CD4-positive, alpha-beta memory T cell (primary cell): ENCODE measurements at regions of chr2 and their contacts with region 1.

Region 1: GRCh38 chr2:195656859-195657633 is at the start of gene SLC39A10:
- DNase-seq: peak; percentile 96 to 99 (median 97)
- H3K4me3 ChIP-seq: peak within 1 kb of the TSS; percentile 66 to 80
- H3K4me3 Mint-ChIP-seq: peak within 1 kb of the TSS; percentile 96 to 99 (median 99)
- H3K27ac ChIP-seq: peak within 1 kb of the TSS; percentile 99
- H3K27ac Mint-ChIP-seq: peak within 1 kb of the TSS; percentile 97 to 100 (median 99)
- H3K4me1 ChIP-seq: peaks cover 35% of the 10 kb centered on the region
- H3K4me1 Mint-ChIP-seq: peaks cover 18 to 48% (median 22%) of the 10 kb centered on the region in 4 donors
- H3K27me3 ChIP-seq: no peaks in the 10 kb centered on the region
- H3K27me3 Mint-ChIP-seq: peaks cover 0 to 2% of the 10 kb centered on the region in 2 donors
- total RNA-seq, gene SLC39A10: 101 to 102 TPM

Region 2: GRCh38 chr2:195404651-195405050 is 252.4 kb before region 1 on chr2:
- CTCF ChIA-PET with region 1: interaction called, 4 read pairs
- POLR2A ChIA-PET with region 1: no interaction called
- intact Hi-C with region 1: loop called (anchors 1 kb)
- DNase-seq: peak in 4 of 5 donors; percentile 2 to 14 (median 6)
- H3K4me3 ChIP-seq: no peak overlapping the region
- H3K4me3 Mint-ChIP-seq: no peak overlapping the region
- H3K27ac ChIP-seq: no peak overlapping the region
- H3K27ac Mint-ChIP-seq: no peak overlapping the region
- H3K4me1 ChIP-seq: no peaks in the 10 kb centered on the region
- H3K4me1 Mint-ChIP-seq: peaks cover 0 to 2% (median 0%) of the 10 kb centered on the region in 4 donors
- H3K27me3 ChIP-seq: no peaks in the 10 kb centered on the region
- H3K27me3 Mint-ChIP-seq: no peaks in the 10 kb centered on the region

Region 3: DNA sequence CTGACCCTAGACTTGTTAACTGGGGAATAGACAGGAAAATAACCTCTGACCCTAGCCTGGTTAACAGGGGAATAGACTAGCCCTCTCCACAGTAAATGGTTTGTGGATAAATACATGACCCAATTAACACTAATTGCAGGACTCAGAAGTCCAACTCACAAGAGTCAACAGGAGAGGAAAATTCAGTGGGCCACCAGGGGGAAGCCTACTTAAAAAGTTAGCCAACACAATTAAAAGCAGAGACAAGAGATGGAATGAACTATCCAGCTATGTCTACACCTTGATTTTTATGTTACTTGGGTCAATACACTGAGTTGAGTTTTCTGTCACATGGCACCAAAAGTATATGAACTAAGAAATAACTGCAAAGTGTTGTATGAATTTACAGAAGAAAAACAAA is 158.9 kb before region 1 on chr2:
- CTCF ChIA-PET with region 1: interaction called, 245 read pairs
- POLR2A ChIA-PET with region 1: interaction called, 150 read pairs
- intact Hi-C with region 1: loop called (anchors 1 kb)
- DNase-seq: peak; percentile 52 to 66 (median 60)
- H3K4me3 ChIP-seq: no peak overlapping the region
- H3K4me3 Mint-ChIP-seq: peak overlapping the region in 2 of 8 donors; percentile 10 to 22
- H3K27ac ChIP-seq: no peak overlapping the region
- H3K27ac Mint-ChIP-seq: peak overlapping the region in 3 of 7 donors; percentile 2 to 70 (median 19)
- H3K4me1 ChIP-seq: peaks cover 12% of the 10 kb centered on the region
- H3K4me1 Mint-ChIP-seq: peaks cover 18 to 41% (median 31%) of the 10 kb centered on the region in 4 donors
- H3K27me3 ChIP-seq: no peaks in the 10 kb centered on the region
- H3K27me3 Mint-ChIP-seq: no peaks in the 10 kb centered on the region

Region 4: GRCh38 chr2:195533771-195534642 is 123.0 kb before region 1 on chr2:
- CTCF ChIA-PET with region 1: interaction called, 126 read pairs
- POLR2A ChIA-PET with region 1: interaction called, 319 read pairs
- intact Hi-C with region 1: loop called (anchors 1 kb)
- DNase-seq: peak in 4 of 5 donors; percentile 42 to 77 (median 49)
- H3K4me3 ChIP-seq: peak overlapping the region; percentile 59 to 70
- H3K4me3 Mint-ChIP-seq: peak overlapping the region; percentile 81 to 92 (median 86)
- H3K27ac ChIP-seq: peak overlapping the region; percentile 55
- H3K27ac Mint-ChIP-seq: peak overlapping the region; percentile 93 to 98 (median 96)
- H3K4me1 ChIP-seq: peaks cover 83% of the 10 kb centered on the region
- H3K4me1 Mint-ChIP-seq: peaks cover 69 to 91% (median 78%) of the 10 kb centered on the region in 4 donors
- H3K27me3 ChIP-seq: no peaks in the 10 kb centered on the region
- H3K27me3 Mint-ChIP-seq: no peaks in the 10 kb centered on the region

Region 5: GRCh38 chr2:195575879-195576401 is 81.1 kb before region 1 on chr2:
- CTCF ChIA-PET with region 1: interaction called, 96 read pairs
- POLR2A ChIA-PET with region 1: interaction called, 135 read pairs
- intact Hi-C with region 1: loop called (anchors 1 kb)
- DNase-seq: no peak
- H3K4me3 ChIP-seq: no peak overlapping the region
- H3K4me3 Mint-ChIP-seq: peak overlapping the region in 7 of 8 donors; percentile 25 to 70 (median 57)
- H3K27ac ChIP-seq: no peak overlapping the region
- H3K27ac Mint-ChIP-seq: peak overlapping the region in 6 of 7 donors; percentile 36 to 93 (median 90)
- H3K4me1 ChIP-seq: peaks cover 47% of the 10 kb centered on the region
- H3K4me1 Mint-ChIP-seq: peaks cover 35 to 64% (median 52%) of the 10 kb centered on the region in 4 donors
- H3K27me3 ChIP-seq: no peaks in the 10 kb centered on the region
- H3K27me3 Mint-ChIP-seq: no peaks in the 10 kb centered on the region

Region 6: DNA sequence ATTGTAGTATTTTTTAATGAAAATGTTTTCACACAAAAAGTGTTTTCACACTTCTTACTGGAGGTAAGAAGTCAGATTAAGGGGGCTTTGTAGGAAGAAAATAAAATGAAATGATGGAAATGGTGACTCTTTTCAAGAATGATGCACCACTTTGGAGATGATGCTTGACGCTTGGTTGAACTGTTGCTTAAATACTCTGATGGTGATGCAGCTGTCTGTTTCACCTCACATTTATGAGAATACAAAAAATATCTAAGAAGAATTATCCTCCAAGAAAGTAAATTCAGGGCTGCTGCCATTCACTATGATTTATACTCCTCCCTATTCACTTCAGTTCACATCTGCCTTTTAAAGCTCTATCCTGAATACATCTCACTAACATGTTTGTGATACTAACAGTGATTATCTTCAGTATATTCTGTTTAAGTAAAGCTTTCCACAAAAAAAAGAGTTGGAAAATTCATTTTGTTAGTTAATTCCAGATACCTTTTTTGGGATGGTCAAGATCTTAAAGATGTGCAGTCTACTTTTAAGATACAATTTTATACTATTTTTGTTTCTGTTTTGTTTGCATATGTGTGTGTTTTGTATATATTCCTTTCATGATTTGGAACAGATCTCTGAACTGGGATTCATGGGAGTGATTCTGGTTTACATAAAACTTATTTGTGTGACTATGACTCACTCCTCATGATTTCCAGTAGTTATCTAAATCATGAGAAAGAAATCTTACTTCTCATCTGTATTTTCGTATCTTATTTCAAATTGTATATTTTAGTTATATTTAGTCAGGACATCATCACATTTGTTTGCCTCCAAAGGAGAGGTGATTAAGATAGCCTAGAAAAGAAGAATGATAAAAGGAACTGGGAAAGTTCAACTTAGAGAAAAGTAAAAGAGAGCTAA is 53.1 kb after region 1 on chr2:
- CTCF ChIA-PET with region 1: no interaction called
- POLR2A ChIA-PET with region 1: no interaction called
- intact Hi-C with region 1: no loop called
- DNase-seq: no peak
- H3K4me3 ChIP-seq: no peak overlapping the region
- H3K4me3 Mint-ChIP-seq: no peak overlapping the region
- H3K27ac ChIP-seq: no peak overlapping the region
- H3K27ac Mint-ChIP-seq: peak overlapping the region in 2 of 7 donors; percentile 5 to 44
- H3K4me1 ChIP-seq: no peaks in the 10 kb centered on the region
- H3K4me1 Mint-ChIP-seq: peaks cover 2 to 5% (median 3%) of the 10 kb centered on the region in 4 donors
- H3K27me3 ChIP-seq: no peaks in the 10 kb centered on the region
- H3K27me3 Mint-ChIP-seq: no peaks in the 10 kb centered on the region

Region 7: DNA sequence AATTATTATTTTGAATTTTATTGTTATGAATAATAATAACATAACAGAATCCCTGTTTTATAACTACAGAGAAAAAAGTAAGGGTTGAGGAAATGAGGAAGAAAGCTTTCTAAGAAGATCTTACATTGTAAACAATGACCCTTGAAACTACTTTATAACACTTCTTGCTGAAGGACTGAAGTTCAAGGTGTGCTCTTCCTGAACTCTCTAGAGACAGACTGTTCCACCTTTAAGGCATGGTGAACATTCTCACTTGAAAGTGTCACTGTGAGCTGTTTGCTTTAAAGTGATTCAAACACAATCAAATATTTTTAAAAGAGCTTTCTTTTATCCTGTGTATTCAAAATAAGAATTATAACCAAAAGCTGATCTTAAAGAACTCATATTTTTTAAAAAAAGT is 280.1 kb after region 1 on chr2:
- CTCF ChIA-PET with region 1: interaction called, 4 read pairs
- POLR2A ChIA-PET with region 1: no interaction called
- intact Hi-C with region 1: loop called (anchors 5 kb)
- DNase-seq: no peak
- H3K4me3 ChIP-seq: no peak overlapping the region
- H3K4me3 Mint-ChIP-seq: no peak overlapping the region
- H3K27ac ChIP-seq: no peak overlapping the region
- H3K27ac Mint-ChIP-seq: no peak overlapping the region
- H3K4me1 ChIP-seq: no peaks in the 10 kb centered on the region
- H3K4me1 Mint-ChIP-seq: no peaks in the 10 kb centered on the region
- H3K27me3 ChIP-seq: no peaks in the 10 kb centered on the region
- H3K27me3 Mint-ChIP-seq: peaks cover 0 to 6% of the 10 kb centered on the region in 2 donors

Region 8: GRCh38 chr2:196225213-196225612 is 568.2 kb after region 1 on chr2:
- CTCF ChIA-PET with region 1: no interaction called
- POLR2A ChIA-PET with region 1: no interaction called
- intact Hi-C with region 1: no loop called
- DNase-seq: no peak
- H3K4me3 ChIP-seq: no peak overlapping the region
- H3K4me3 Mint-ChIP-seq: peak overlapping the region in 3 of 8 donors; percentile 33 to 57 (median 41)
- H3K27ac ChIP-seq: no peak overlapping the region
- H3K27ac Mint-ChIP-seq: peak overlapping the region in 5 of 7 donors; percentile 1 to 68 (median 54)
- H3K4me1 ChIP-seq: peaks cover 79% of the 10 kb centered on the region
- H3K4me1 Mint-ChIP-seq: peaks cover 51 to 85% (median 69%) of the 10 kb centered on the region in 4 donors
- H3K27me3 ChIP-seq: no peaks in the 10 kb centered on the region
- H3K27me3 Mint-ChIP-seq: no peaks in the 10 kb centered on the region

Region 9: DNA sequence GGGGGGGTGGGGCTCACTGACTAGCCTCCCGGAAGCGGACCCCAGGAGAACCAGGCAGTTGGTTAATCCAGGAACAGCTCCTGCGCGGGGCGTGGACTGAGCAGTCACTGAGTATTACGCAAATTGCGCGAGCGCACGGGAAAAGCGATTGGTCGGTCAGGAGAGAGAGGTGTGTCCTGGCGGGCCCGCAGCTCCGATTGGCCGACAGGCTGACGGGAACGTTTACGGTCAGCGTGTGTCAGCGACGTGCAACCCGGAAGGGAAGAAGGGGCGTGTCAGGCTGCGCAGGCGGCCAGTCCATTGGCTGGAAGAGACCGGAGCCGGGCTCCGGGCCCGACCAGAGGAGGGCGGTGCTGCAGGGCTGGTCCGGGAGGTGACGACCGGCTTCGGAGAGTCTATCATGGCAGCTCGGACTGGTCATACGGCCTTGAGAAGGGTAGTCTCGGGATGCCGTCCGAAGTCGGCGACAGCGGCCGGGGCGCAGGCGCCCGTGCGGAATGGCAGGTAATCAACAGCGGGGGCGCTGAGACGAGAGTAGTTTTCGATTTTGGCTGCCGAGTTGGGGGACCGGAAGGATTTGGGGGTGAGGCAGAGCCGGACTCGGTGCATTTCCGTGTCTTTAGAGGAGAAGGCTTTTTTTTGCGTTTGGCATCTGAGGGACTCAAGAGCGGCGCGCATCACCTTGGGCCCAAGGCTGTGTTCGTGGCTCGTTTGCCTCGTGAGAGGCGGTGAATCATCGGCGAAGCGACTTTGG is 1796.3 kb after region 1 on chr2 and contains the start of gene COQ10B:
- CTCF ChIA-PET with region 1: no interaction called
- POLR2A ChIA-PET with region 1: no interaction called
- intact Hi-C with region 1: loop called (anchors 5 kb)
- DNase-seq: peak; percentile 97 to 99 (median 99)
- H3K4me3 ChIP-seq: peak within 1 kb of the TSS; percentile 87 to 88
- H3K4me3 Mint-ChIP-seq: peak within 1 kb of the TSS; percentile 96 to 100 (median 99)
- H3K27ac ChIP-seq: peak within 1 kb of the TSS; percentile 99
- H3K27ac Mint-ChIP-seq: peak within 1 kb of the TSS; percentile 99 to 100 (median 100)
- H3K4me1 ChIP-seq: peaks cover 36% of the 10 kb centered on the region
- H3K4me1 Mint-ChIP-seq: peaks cover 28 to 65% (median 41%) of the 10 kb centered on the region in 4 donors
- H3K27me3 ChIP-seq: no peaks in the 10 kb centered on the region
- H3K27me3 Mint-ChIP-seq: peaks cover 2 to 3% of the 10 kb centered on the region in 2 donors
- total RNA-seq, gene COQ10B: 31.7 to 33.1 TPM